Activated CD4-positive, alpha-beta memory T cell treated with anti-CD3 and anti-CD28 coated beads, Interleukin-2, amount 10 ng/mL, durations not matched to agents 7 days and 5 days (primary cell): ENCODE measurements at regions of chr1 and their contacts with region 1.

Region 1: GRCh38 chr1:166910396-166910994 is 34.4 kb upstream of the TADA1 start:
- DNase-seq: peak; percentile 83
- H3K4me3 Mint-ChIP-seq: no peak overlapping the region
- H3K27ac Mint-ChIP-seq: no peak overlapping the region
- H3K4me1 Mint-ChIP-seq: peaks cover 41% of the 10 kb centered on the region
- H3K27me3 Mint-ChIP-seq: peaks cover 6% of the 10 kb centered on the region

Region 2: GRCh38 chr1:166884040-166884642 is 26.4 kb before region 1 on chr1:
- CTCF ChIA-PET with region 1: interaction called, 23 read pairs
- POLR2A ChIA-PET with region 1: interaction called, 7 read pairs
- DNase-seq: peak; percentile 55
- H3K4me3 Mint-ChIP-seq: no peak overlapping the region
- H3K27ac Mint-ChIP-seq: no peak overlapping the region
- H3K4me1 Mint-ChIP-seq: peaks cover 25% of the 10 kb centered on the region
- H3K27me3 Mint-ChIP-seq: peaks cover 28% of the 10 kb centered on the region

Region 3: DNA sequence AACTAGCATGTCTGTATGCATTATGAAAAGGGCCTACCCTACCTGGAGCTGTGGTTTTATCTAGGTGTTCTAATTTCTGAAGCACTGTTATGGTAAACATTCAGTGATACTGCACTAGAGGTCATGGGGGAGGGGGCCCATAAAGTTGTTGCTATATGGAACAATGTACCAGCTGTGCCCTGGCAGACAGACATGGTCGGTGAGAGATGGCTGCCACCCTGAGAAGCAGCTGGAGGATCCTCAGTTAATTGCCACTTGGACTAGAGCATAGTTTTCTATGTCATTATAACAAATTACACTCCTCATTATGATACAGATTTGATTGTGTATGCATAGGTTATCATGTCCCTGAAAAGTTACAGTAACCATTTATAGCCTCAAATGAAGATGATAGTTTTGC is 19.4 kb after region 1 on chr1:
- CTCF ChIA-PET with region 1: no interaction called
- POLR2A ChIA-PET with region 1: no interaction called
- DNase-seq: no peak
- H3K4me3 Mint-ChIP-seq: no peak overlapping the region
- H3K27ac Mint-ChIP-seq: no peak overlapping the region
- H3K4me1 Mint-ChIP-seq: no peaks in the 10 kb centered on the region
- H3K27me3 Mint-ChIP-seq: peaks cover 9% of the 10 kb centered on the region

Region 4: DNA sequence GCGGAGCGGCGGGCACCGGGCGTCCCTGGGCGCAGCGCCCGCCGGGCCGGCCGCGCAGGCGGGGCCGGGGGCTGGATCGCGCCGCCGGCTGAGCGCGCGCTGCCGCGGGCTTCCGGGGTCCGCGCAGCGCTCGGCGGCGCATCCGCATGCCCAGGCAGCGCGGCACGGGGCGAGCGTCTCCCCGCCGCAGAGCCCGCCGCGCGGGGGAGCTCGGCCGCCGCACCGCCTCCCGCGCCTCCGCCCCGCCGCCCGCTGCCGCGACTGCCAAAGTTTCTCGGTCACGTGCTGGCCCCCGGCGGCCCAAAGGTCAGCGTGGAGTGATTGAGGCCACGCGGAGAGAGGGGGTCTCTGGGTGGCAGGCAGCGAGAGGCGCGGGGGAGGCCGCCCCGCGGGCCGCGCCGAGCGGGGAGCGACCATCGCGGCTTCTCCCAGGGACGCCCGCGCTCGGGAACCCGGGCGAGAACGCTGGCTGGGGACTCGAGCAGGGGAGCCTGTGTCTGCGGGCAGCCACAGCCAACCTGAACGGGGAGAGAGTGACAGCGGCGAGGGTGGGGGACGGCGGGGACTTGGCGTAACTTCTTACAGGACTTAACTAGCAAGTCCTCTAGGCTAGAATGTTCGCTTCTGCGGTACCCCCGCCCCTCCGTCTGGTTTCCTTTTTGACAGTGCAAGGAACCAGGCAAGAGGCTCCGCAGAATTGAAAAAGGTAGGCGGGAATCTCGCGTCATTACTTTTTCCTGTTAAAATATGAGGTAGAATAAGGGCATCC is 65.0 kb after region 1 on chr1 and contains the start of gene ILDR2:
- CTCF ChIA-PET with region 1: interaction called, 11 read pairs
- POLR2A ChIA-PET with region 1: interaction called, 3 read pairs
- DNase-seq: peak; percentile 63
- H3K4me3 Mint-ChIP-seq: peak within 1 kb of the TSS; percentile 91
- H3K27ac Mint-ChIP-seq: peak within 1 kb of the TSS; percentile 74
- H3K4me1 Mint-ChIP-seq: peaks cover 48% of the 10 kb centered on the region
- H3K27me3 Mint-ChIP-seq: peaks cover 35% of the 10 kb centered on the region
- total RNA-seq, gene ILDR2: 9.3 to 9.8 TPM

Region 5: GRCh38 chr1:167059045-167059808 is 148.7 kb after region 1 on chr1:
- CTCF ChIA-PET with region 1: interaction called, 722 read pairs
- POLR2A ChIA-PET with region 1: interaction called, 47 read pairs
- DNase-seq: peak; percentile 79
- H3K4me3 Mint-ChIP-seq: no peak overlapping the region
- H3K27ac Mint-ChIP-seq: peak overlapping the region; percentile 22
- H3K4me1 Mint-ChIP-seq: peaks cover 14% of the 10 kb centered on the region
- H3K27me3 Mint-ChIP-seq: peaks cover 2% of the 10 kb centered on the region